Activated CD4-positive, alpha-beta T cell treated with anti-CD3 and anti-CD28 coated beads, Interleukin-2, amount 10 ng/mL, durations not matched to agents 7 days and 5 days (primary cell): ENCODE measurements at regions of chr2 and their contacts with region 1.

Region 1: DNA sequence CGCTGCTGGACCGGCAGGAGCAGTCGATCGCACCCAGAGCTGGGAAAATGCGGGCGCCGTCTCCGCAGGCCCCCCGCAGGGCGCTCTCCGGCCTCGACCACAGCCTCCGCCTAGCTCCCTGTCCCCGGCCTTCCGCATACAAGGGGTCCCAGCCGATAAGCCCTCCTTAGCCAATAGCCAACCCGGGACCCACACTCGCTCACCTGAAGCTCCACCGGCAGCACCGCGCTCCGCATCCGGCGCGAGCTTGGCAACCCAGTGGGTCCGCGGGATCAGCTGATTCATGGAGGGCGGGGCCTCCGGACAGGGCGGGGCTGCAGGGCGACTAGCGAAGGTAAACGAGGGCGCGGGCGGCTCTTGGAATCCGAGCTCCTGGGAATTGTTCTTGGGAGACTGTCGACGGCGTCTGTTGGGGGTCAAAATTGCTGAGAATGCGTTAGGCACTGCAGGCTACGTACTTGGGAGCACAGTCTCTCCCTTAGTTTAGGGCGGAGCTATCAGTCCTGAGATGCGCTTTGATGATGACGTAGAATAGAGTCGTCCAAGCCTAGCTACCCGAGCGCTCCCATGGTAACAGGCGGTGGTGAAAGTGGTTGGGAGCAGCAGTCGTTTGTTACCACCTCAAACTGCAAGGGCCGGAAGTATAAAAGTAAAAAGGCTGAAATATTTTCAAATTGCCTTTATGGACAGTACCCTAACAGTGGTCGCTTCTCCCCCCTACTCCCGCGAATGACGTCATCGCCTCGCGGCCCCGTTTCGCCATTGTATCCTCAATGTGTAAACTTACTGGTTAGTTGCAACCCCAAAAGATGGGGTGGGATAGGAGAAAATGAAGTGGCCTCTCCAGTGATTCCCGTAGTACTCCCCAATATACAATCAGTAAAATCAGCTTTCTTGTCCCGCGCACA is at the start of gene ALS2:
- DNase-seq: peak; percentile 95
- H3K4me3 Mint-ChIP-seq: peak within 1 kb of the TSS; percentile 89
- H3K27ac Mint-ChIP-seq: peak within 1 kb of the TSS; percentile 97
- H3K4me1 Mint-ChIP-seq: peaks cover 24% of the 10 kb centered on the region
- H3K27me3 Mint-ChIP-seq: peaks cover 15% of the 10 kb centered on the region
- total RNA-seq, gene ALS2: 10.7 to 11.7 TPM

Region 2: GRCh38 chr2:201765799-201766198 is 15.1 kb before region 1 on chr2:
- CTCF ChIA-PET with region 1: interaction called, 11 read pairs
- POLR2A ChIA-PET with region 1: interaction called, 3 read pairs
- DNase-seq: no peak
- H3K4me3 Mint-ChIP-seq: no peak overlapping the region
- H3K27ac Mint-ChIP-seq: no peak overlapping the region
- H3K4me1 Mint-ChIP-seq: no peaks in the 10 kb centered on the region
- H3K27me3 Mint-ChIP-seq: no peaks in the 10 kb centered on the region